B cell (primary cell): ENCODE measurements at regions of chr2 and their contacts with region 1.

Region 1: DNA sequence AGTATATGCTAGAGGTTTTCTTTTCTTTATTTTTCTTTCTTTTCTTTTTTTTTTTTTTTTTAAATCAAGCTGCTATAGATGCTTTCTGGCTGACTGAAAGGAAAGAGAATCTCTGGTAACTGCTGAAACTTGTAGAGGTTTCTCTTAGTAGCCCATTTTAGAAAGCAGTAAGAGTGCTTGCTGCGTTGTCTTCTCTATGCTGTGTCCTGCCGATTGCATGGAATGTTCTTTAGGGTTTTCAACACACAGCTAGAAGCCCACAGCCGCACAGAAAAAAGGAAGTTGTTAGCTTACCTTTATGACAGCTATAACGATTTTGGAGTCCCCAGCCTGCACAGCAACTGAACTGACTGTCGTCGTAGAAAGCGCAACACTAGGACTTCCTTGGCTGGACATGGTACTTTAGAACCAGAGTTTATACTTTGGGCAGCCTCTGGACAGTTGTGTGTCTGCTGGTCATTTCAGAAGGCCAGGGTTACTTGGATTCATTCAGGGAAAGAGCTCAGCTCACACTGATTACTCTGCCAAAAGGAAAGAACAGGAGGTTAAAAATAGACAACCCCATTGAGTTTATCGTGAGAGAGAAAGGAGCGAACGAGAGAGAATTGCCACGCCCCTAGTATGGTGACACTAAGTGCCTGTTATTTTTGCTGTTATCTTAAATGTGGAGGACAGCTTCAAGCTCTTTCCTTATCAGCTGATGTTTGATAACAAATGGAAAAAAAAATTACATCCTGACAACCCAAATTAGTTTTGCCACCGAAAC is at the start of gene CCDC141:
- DNase-seq: peak; percentile 72
- ATAC-seq: peak; percentile 82
- H3K4me3 ChIP-seq: peak within 1 kb of the TSS; percentile 46 to 83 (median 70)
- H3K4me3 Mint-ChIP-seq: peak within 1 kb of the TSS; percentile 94
- H3K27ac ChIP-seq: peak within 1 kb of the TSS; percentile 81 to 82
- H3K27ac Mint-ChIP-seq: peak within 1 kb of the TSS; percentile 95
- H3K4me1 ChIP-seq: peaks cover 38 to 44% of the 10 kb centered on the region in 2 donors
- H3K4me1 Mint-ChIP-seq: peaks cover 56% of the 10 kb centered on the region
- H3K27me3 ChIP-seq: no peaks in the 10 kb centered on the region
- H3K27me3 Mint-ChIP-seq: no peaks in the 10 kb centered on the region
- CTCF ChIP-seq: no peak
- total RNA-seq, gene CCDC141: 42.1 and 47.5 TPM in 2 replicates

Region 2: DNA sequence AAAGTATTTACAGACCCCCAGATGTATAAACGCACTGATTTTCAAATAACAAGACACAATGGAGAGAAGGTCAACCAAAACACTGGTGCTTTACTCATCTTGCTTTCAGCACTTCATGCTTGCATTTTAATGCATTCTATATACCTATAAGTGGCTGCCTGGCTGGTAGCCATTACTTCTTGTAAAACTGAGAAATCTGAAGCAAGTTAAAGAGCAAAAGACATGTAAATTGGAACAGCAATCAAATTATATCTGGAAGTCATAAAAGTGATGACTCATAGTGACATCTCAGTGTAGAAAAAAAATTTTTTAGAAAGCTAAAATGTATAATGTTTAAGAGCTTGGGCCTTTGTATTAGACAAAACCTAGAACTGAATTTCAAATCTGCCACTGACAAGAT is 106.0 kb before region 1 on chr2:
- CTCF ChIA-PET with region 1: no interaction called
- POLR2A ChIA-PET with region 1: no interaction called
- intact Hi-C with region 1: no loop called
- DNase-seq: no peak
- ATAC-seq: no peak
- H3K4me3 ChIP-seq: no peak overlapping the region
- H3K4me3 Mint-ChIP-seq: no peak overlapping the region
- H3K27ac ChIP-seq: no peak overlapping the region
- H3K27ac Mint-ChIP-seq: no peak overlapping the region
- H3K4me1 ChIP-seq: no peaks in the 10 kb centered on the region
- H3K4me1 Mint-ChIP-seq: no peaks in the 10 kb centered on the region
- H3K27me3 ChIP-seq: no peaks in the 10 kb centered on the region
- H3K27me3 Mint-ChIP-seq: no peaks in the 10 kb centered on the region
- CTCF ChIP-seq: no peak

Region 3: GRCh38 chr2:179031731-179032408 is 17.9 kb before region 1 on chr2:
- CTCF ChIA-PET with region 1: interaction called, 7 read pairs
- POLR2A ChIA-PET with region 1: interaction called, 8 read pairs
- intact Hi-C with region 1: loop called (anchors 2 kb)
- DNase-seq: peak; percentile 50
- ATAC-seq: peak; percentile 76
- H3K4me3 ChIP-seq: peak overlapping the region; percentile 5 to 58 (median 33)
- H3K4me3 Mint-ChIP-seq: peak overlapping the region; percentile 86
- H3K27ac ChIP-seq: peak overlapping the region; percentile 59 to 70
- H3K27ac Mint-ChIP-seq: peak overlapping the region; percentile 96
- H3K4me1 ChIP-seq: peaks cover 13 to 14% of the 10 kb centered on the region in 2 donors
- H3K4me1 Mint-ChIP-seq: peaks cover 24% of the 10 kb centered on the region
- H3K27me3 ChIP-seq: no peaks in the 10 kb centered on the region
- H3K27me3 Mint-ChIP-seq: no peaks in the 10 kb centered on the region
- CTCF ChIP-seq: no peak

Region 4: DNA sequence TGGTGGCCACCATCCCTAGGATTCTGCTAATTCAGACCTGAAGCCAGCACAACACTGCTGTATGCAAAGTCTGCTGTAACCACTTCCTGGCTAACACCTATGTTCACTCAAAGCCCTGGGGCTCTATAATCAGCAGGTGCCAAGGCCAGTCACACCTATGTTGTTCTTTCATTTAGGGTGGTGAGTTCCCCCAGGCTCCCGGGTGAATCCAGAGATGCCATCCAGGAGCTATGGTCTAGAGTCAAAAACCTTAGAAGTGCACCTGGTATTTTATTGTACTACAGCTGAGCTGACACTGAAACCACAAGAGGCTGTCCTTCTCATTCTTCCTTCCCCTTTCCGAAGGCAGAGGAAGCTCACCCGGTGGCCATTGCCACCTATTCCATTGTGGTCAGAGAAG is 46.4 kb after region 1 on chr2:
- CTCF ChIA-PET with region 1: interaction called, 7 read pairs
- POLR2A ChIA-PET with region 1: no interaction called
- intact Hi-C with region 1: loop called (anchors 5 kb)
- DNase-seq: peak; percentile 56
- ATAC-seq: peak; percentile 83
- H3K4me3 ChIP-seq: peak overlapping the region in 3 of 5 experiments; percentile 2 to 40 (median 10)
- H3K4me3 Mint-ChIP-seq: peak overlapping the region; percentile 41
- H3K27ac ChIP-seq: peak overlapping the region in 1 of 2 donors; percentile 23
- H3K27ac Mint-ChIP-seq: peak overlapping the region; percentile 67
- H3K4me1 ChIP-seq: peaks cover 25 to 28% of the 10 kb centered on the region in 2 donors
- H3K4me1 Mint-ChIP-seq: peaks cover 41% of the 10 kb centered on the region
- H3K27me3 ChIP-seq: no peaks in the 10 kb centered on the region
- H3K27me3 Mint-ChIP-seq: no peaks in the 10 kb centered on the region
- CTCF ChIP-seq: no peak